PC-9 (cell line): ENCODE measurements at regions of chrX and their contacts with region 1.

Region 1: DNA sequence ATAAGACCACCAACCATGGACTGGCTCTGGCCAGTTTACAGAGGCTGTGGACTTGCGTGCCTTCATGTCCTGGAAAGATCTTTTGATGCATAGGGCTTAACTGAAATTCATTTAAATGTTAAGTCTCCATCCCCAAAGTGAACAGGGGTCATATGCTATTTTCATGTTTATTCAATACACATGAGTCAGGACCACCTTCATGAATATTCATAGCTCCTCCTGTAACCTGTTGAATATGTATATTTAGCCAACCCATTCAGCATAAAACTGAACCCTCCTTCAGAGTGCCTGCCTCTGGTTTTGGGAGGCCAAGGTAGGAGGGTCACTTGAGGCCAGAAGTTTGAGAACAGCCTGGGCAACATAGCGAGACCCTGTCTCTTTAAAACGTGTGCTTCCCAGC is 7.1 kb downstream of the CTPS2 start:
- DNase-seq: no peak
- H3K4me3 ChIP-seq: no peak overlapping the region
- H3K27ac ChIP-seq: no peak overlapping the region
- H3K4me1 ChIP-seq: no peaks in the 10 kb centered on the region
- H3K27me3 ChIP-seq: no peaks in the 10 kb centered on the region
- CTCF ChIP-seq: no peak

Region 2: GRCh38 chrX:16687514-16687913 is 17.9 kb before region 1 on chrX:
- CTCF ChIA-PET with region 1: no interaction called
- POLR2A ChIA-PET with region 1: interaction called, 32 read pairs
- intact Hi-C with region 1: no loop called
- DNase-seq: no peak
- H3K4me3 ChIP-seq: no peak overlapping the region
- H3K27ac ChIP-seq: no peak overlapping the region
- H3K4me1 ChIP-seq: no peaks in the 10 kb centered on the region
- H3K27me3 ChIP-seq: no peaks in the 10 kb centered on the region
- CTCF ChIP-seq: no peak